Left ventricle myocardium superior (tissue), 1 donor: ENCODE measurements at regions of chr2 and their contacts with region 1.

Region 1: GRCh38 chr2:136378712-136379595 is 261.0 kb upstream of the CXCR4 start:
- DNase-seq: peak; percentile 40
- ATAC-seq: peak; percentile 72

Region 2: DNA sequence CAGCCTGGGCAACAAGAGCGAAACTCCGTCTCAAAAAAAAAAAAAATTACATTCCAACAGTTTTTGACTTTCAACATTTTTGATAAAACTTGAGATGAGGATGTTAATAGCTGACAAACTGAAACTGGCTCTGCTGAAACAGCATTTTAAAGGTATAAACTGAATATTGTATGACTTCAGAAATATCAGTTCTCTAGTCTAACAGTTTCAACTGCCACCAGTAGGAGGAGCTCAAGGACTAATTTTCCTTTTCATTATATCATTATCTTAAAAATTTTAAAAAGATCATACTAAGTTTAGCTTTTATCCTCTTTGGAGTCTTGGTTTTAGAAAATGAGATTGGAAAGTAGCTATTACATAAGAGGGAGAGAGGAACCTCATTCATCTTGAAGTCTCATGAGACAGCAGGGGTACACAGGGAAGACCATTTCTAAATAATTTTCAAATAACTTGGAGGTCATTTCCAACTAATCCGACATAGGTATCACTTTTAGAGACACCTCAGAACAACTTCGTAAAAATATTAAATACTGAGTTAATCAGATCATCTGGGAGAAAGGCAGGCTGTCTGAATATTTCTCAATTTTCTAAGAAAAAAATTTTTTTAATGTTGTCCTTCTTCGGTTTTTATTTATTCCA is 465.1 kb before region 1 on chr2:
- intact Hi-C with region 1: loop called (anchors 5 kb)
- DNase-seq: no peak
- ATAC-seq: no peak

Region 3: GRCh38 chr2:136225950-136226835 is 152.8 kb before region 1 on chr2:
- intact Hi-C with region 1: no loop called
- DNase-seq: no peak
- ATAC-seq: no peak